ENCODE measurements at regions of chr20 and their contacts with region 1.

Region 1: DNA sequence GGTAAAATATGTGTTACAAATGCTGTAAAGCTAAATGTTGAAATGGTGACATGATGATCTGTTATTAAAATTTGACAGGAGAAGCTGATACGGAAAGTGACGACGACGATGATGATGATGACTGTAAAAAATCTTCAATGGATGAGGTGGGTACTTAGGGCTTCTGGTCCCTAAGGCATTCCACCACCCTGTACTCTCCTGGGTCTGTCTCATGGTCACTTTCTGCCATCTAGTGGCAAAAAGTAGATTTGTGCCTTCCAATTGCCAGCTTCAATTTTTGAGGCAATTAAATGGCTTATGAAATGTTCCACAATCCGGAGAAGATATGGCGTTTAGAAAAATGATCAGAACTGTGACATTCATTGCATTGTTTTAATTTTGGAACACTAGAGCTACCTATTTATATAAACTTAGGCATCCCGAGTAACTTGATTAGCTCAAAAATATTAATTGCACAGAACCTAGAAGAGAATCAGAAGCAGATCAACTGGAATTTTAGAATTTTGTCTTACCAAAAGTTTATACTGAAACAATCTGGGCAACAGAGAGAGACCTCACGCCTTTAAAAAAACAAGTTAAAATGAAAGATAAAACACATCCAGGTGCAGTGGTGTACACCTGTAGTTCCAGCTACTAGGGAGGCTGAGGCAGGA is 346.5 kb upstream of the PLCB4 start:
- DNase-seq: peak; percentile 20 to 21
- H3K4me3 ChIP-seq: no peak overlapping the region
- H3K27ac ChIP-seq: no peak overlapping the region
- H3K4me1 ChIP-seq: no peaks in the 10 kb centered on the region
- H3K27me3 ChIP-seq: no peaks in the 10 kb centered on the region
- CTCF ChIP-seq: peak; percentile 72 to 85 (median 80)
- POLR2A ChIP-seq: no peak

Region 2: GRCh38 chr20:8389381-8390036 is 332.9 kb before region 1 on chr20:
- intact Hi-C with region 1: loop called (anchors 10 kb)
- DNase-seq: no peak
- H3K4me3 ChIP-seq: no peak overlapping the region
- H3K27ac ChIP-seq: no peak overlapping the region
- H3K4me1 ChIP-seq: no peaks in the 10 kb centered on the region
- H3K27me3 ChIP-seq: no peaks in the 10 kb centered on the region
- CTCF ChIP-seq: peak; percentile 46 to 58 (median 52)
- POLR2A ChIP-seq: no peak

Region 3: GRCh38 chr20:8829256-8829655 is 106.9 kb after region 1 on chr20:
- intact Hi-C with region 1: no loop called
- DNase-seq: no peak
- H3K4me3 ChIP-seq: no peak overlapping the region
- H3K27ac ChIP-seq: no peak overlapping the region
- H3K4me1 ChIP-seq: no peaks in the 10 kb centered on the region
- H3K27me3 ChIP-seq: no peaks in the 10 kb centered on the region
- CTCF ChIP-seq: no peak
- POLR2A ChIP-seq: no peak